K562 (cell line): ENCODE measurements at regions of chr3 and their contacts with region 1.

Region 1: DNA sequence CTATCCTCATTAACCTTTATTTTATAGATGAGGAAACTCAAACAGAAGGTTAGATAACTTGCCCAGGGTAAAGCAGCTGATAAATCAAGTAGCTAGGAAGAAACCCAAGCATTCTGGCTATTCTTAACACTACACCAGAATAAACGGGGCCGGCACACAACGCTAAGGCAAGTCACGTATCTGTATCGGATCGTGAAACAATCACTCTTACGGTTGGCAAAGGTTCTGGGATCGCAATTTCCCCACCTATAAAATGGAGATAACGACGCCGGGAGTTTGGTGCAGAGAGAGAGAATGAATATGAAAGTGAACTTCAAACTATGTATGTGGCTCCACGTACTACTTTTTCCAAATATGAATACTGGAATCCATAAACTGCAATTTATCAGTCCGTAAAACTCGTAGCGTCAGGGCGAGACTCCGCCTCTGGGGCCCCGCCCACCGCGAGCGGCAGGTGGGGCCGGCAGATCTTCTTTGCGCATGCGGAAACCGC is 252 bp upstream of the ARMC8 start:
- DNase-seq: peak; percentile 88 to 96 (median 90)
- ATAC-seq: peak; percentile 88
- H3K4me3 ChIP-seq: peak overlapping the region; percentile 77
- H3K27ac ChIP-seq: peak overlapping the region; percentile 97
- H3K4me1 ChIP-seq: peaks cover 0 to 14% of the 10 kb centered on the region in 2 experiments; a peak in 2 of 5 replicates
- H3K27me3 ChIP-seq: no peaks in the 10 kb centered on the region
- CTCF ChIP-seq: no peak
- EP300 ChIP-seq: no peak
- POLR2A ChIP-seq: no peak
- RAD21 ChIP-seq: no peak

Region 2: GRCh38 chr3:138174421-138175122 is 12.3 kb before region 1 on chr3 and contains the start of gene DBR1:
- CTCF ChIA-PET with region 1: no interaction called
- POLR2A ChIA-PET with region 1: interaction called, 14 read pairs
- in situ Hi-C with region 1: no loop called
- intact Hi-C with region 1: no loop called
- DNase-seq: peak; percentile 67 to 86 (median 74)
- ATAC-seq: peak; percentile 95
- H3K4me3 ChIP-seq: peak within 1 kb of the TSS; percentile 70
- H3K27ac ChIP-seq: peak within 1 kb of the TSS; percentile 83
- H3K4me1 ChIP-seq: no peaks in the 10 kb centered on the region; a peak in 2 of 5 replicates
- H3K27me3 ChIP-seq: no peaks in the 10 kb centered on the region
- CTCF ChIP-seq: peak in 1 of 3 experiments; percentile 8; a peak in 1 of 6 replicates
- EP300 ChIP-seq: no peak
- POLR2A ChIP-seq: peak; percentile 91
- RAD21 ChIP-seq: no peak
- polyA plus RNA-seq, gene DBR1: 2.7 to 6.0 TPM

Region 3: GRCh38 chr3:138202945-138203701 is 16.3 kb after region 1 on chr3:
- CTCF ChIA-PET with region 1: no interaction called
- POLR2A ChIA-PET with region 1: no interaction called
- in situ Hi-C with region 1: no loop called
- intact Hi-C with region 1: no loop called
- DNase-seq: no peak
- ATAC-seq: no peak
- H3K4me3 ChIP-seq: no peak overlapping the region
- H3K27ac ChIP-seq: no peak overlapping the region
- H3K4me1 ChIP-seq: peaks cover 22 to 38% of the 10 kb centered on the region in 2 experiments
- H3K27me3 ChIP-seq: no peaks in the 10 kb centered on the region
- CTCF ChIP-seq: no peak
- EP300 ChIP-seq: no peak
- POLR2A ChIP-seq: no peak
- RAD21 ChIP-seq: no peak